Activated CD4-positive, alpha-beta memory T cell treated with anti-CD3 and anti-CD28 coated beads, Interleukin-2, amount 10 ng/mL, durations not matched to agents 7 days and 5 days (primary cell): ENCODE measurements at regions of chr2 and their contacts with region 1.

Region 1: DNA sequence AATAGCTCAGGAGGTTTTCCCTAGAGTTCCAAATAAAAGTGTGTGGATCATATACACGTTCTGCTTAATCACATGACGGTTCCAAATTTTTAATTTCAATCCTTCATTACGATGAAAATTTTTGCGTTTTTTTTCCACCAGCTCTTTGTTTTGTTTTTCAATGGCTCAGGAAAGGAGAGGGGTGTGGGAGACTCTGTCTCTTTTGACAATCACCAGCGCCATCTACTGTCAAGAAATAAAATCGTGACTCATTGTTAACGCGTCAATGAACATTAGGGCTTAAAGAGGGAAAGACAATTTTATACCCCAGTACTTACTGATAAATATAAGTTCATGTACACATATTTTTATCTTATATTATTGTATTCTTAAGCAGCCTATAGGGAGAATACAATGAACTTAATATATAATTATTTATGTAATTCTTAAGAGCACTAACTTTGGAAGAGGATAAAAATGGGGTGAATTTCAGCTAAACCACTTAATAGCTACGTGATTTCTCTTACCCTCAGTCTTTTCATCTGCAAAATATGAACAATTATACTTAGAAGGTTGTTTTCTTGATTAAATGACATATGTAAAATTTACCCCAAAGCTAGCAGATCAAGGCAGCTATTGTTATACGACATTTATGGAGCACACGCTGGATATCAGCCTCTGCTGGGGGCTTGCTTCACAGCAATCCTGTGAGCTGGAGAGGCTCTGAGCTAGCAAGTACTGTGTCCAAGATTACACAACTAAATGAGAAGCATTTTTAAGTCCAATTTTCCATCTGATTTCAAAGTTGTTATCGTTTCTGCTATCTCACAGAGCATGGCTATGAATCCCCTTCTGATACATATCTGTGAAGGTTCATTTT is 47.4 kb upstream of the RMDN2 start:
- DNase-seq: no peak
- H3K4me3 Mint-ChIP-seq: no peak overlapping the region
- H3K27ac Mint-ChIP-seq: no peak overlapping the region
- H3K4me1 Mint-ChIP-seq: peaks cover 13% of the 10 kb centered on the region
- H3K27me3 Mint-ChIP-seq: peaks cover 2% of the 10 kb centered on the region

Region 2: DNA sequence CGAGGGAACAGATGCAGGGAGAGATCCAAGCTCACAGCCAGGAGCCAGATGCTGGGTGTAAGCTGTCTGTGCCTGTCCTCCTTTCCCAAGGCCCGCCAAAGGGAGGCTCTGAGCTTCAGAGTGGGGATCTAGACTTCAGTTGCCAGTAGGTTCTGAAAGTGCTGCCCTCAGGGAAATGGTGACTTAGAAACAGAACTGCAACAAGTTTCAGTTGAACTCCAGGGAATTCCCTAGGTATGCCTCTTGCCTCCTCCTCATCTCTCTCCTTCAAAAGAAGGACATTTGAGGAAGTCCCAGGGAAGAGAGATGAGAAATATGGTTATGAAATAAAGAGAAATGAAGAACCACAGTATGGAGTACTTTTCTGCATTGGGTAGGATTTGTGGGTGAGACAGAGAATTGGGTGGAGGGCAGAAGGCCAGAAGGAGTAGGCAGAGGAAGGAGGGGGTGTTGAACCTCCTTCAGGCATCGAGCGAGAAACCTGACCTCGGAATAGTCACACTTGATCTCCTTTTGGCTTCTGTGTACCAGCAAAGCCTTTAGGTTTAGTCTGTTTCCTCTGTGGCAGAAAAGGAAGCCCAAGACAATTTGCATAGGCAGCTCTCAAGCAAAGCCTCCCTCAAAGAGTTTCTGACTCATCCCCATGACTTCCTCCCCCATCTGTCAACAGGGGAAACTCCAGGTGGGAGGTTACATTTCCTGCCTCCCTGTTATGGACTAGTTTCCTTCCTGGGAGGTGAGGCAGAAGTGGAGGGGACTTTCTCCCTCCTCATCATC is 487.5 kb before region 1 on chr2:
- CTCF ChIA-PET with region 1: interaction called, 201 read pairs
- POLR2A ChIA-PET with region 1: interaction called, 3 read pairs
- DNase-seq: peak; percentile 69
- H3K4me3 Mint-ChIP-seq: no peak overlapping the region
- H3K27ac Mint-ChIP-seq: peak overlapping the region; percentile 75
- H3K4me1 Mint-ChIP-seq: no peaks in the 10 kb centered on the region
- H3K27me3 Mint-ChIP-seq: no peaks in the 10 kb centered on the region

Region 3: GRCh38 chr2:37414470-37414949 is 463.2 kb before region 1 on chr2:
- CTCF ChIA-PET with region 1: interaction called, 92 read pairs
- POLR2A ChIA-PET with region 1: interaction called, 3 read pairs
- DNase-seq: no peak
- H3K4me3 Mint-ChIP-seq: no peak overlapping the region
- H3K27ac Mint-ChIP-seq: no peak overlapping the region
- H3K4me1 Mint-ChIP-seq: peaks cover 5% of the 10 kb centered on the region
- H3K27me3 Mint-ChIP-seq: peaks cover 3% of the 10 kb centered on the region

Region 4: DNA sequence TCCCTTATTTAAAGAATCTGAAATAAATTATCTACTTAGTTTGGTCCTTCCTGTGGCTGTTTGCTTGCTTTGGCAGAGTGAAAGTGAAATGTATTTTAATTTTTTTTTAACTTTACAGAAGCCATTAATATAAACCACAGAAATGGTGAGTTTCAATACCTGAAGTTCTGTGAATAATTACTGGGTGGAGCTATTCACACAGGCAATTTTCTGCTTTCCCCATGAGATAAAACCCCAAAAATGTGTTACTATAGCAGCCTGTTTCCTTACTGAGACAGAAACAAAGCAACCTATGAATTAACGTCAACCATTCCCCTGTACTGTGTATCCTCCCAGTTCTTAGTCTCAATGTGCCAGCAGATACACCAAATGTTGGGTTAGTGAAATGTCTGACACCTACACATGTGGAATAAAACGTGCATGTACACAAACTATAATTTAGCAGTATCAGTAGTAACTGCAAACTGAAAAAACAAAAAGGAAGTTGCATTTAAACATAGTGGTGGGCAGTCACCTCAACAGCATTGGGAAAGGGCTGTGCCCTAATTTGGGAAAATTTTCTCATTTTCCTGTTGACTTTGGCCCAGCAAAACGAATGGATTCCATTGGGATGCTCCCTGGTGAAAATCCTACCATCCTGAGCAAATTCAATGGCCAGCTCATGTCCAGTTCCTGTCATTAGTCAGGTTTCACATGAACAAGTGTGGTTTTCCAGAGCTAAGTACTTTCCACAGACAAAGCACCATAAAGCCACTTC is 25.7 kb before region 1 on chr2:
- CTCF ChIA-PET with region 1: interaction called, 15 read pairs
- POLR2A ChIA-PET with region 1: interaction called, 8 read pairs
- DNase-seq: no peak
- H3K4me3 Mint-ChIP-seq: no peak overlapping the region
- H3K27ac Mint-ChIP-seq: peak overlapping the region; percentile 70
- H3K4me1 Mint-ChIP-seq: peaks cover 33% of the 10 kb centered on the region
- H3K27me3 Mint-ChIP-seq: no peaks in the 10 kb centered on the region

Region 5: DNA sequence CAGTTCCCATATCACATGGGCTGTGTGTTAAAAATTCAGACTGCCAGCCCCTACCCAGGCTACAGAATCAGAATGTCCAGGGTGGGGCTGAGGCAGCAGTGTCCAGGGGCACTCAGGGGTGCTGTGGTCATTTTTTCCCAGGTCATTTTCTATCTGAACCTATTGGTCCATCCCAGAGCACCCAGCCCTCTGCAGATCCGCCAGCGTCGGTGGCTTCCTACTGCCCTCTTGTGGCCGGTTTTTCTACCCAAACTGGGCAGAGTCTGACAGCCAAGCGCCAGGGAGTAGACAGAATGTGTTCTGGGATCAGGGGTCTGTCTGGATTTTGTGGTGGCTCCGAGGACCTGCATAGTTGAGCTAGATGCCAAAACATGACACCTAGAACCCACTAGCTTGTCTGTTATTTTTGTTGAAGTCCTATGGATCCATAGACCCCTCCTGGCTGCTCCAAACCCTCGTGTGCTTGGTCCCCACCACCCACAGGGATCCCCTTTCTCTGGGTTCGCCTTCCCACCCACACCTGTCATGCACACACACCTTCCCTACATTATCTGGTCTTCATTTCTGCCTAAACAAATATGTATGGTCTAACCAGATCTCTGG is 13.3 kb after region 1 on chr2:
- CTCF ChIA-PET with region 1: interaction called, 29 read pairs
- POLR2A ChIA-PET with region 1: no interaction called
- DNase-seq: peak; percentile 68
- H3K4me3 Mint-ChIP-seq: no peak overlapping the region
- H3K27ac Mint-ChIP-seq: no peak overlapping the region
- H3K4me1 Mint-ChIP-seq: peaks cover 29% of the 10 kb centered on the region
- H3K27me3 Mint-ChIP-seq: peaks cover 13% of the 10 kb centered on the region

Region 6: GRCh38 chr2:38016219-38016618 is 138.5 kb after region 1 on chr2:
- CTCF ChIA-PET with region 1: no interaction called
- POLR2A ChIA-PET with region 1: no interaction called
- DNase-seq: no peak
- H3K4me3 Mint-ChIP-seq: no peak overlapping the region
- H3K27ac Mint-ChIP-seq: no peak overlapping the region
- H3K4me1 Mint-ChIP-seq: no peaks in the 10 kb centered on the region
- H3K27me3 Mint-ChIP-seq: no peaks in the 10 kb centered on the region